Transverse colon (tissue), 4 donors: ENCODE measurements at regions of chr12 and their contacts with region 1.

Region 1: GRCh38 chr12:32755654-32756475 is at the start of gene YARS2:
- DNase-seq: peak; percentile 96
- H3K4me3 ChIP-seq: peak within 1 kb of the TSS; percentile 83 to 99 (median 96)
- H3K27ac ChIP-seq: peak within 1 kb of the TSS; percentile 92 to 95 (median 94)
- H3K4me1 ChIP-seq: peaks cover 11 to 24% (median 18%) of the 10 kb centered on the region in 4 donors
- H3K27me3 ChIP-seq: no peaks in the 10 kb centered on the region
- CTCF ChIP-seq: peak; percentile 69 to 92 (median 77)
- EP300 ChIP-seq: no peak
- POLR2A ChIP-seq: peak; percentile 66
- total RNA-seq, gene YARS2: 1.5 to 19.9 (median 10.5) TPM

Region 2: GRCh38 chr12:32478858-32479725 is 276.8 kb before region 1 on chr12:
- in situ Hi-C with region 1: no loop called
- intact Hi-C with region 1: no loop called
- DNase-seq: no peak
- H3K4me3 ChIP-seq: no peak overlapping the region
- H3K27ac ChIP-seq: peak overlapping the region; percentile 20 to 44 (median 30)
- H3K4me1 ChIP-seq: peaks cover 0 to 20% (median 7%) of the 10 kb centered on the region in 4 donors
- H3K27me3 ChIP-seq: no peaks in the 10 kb centered on the region
- CTCF ChIP-seq: no peak
- EP300 ChIP-seq: no peak
- POLR2A ChIP-seq: no peak

Region 3: DNA sequence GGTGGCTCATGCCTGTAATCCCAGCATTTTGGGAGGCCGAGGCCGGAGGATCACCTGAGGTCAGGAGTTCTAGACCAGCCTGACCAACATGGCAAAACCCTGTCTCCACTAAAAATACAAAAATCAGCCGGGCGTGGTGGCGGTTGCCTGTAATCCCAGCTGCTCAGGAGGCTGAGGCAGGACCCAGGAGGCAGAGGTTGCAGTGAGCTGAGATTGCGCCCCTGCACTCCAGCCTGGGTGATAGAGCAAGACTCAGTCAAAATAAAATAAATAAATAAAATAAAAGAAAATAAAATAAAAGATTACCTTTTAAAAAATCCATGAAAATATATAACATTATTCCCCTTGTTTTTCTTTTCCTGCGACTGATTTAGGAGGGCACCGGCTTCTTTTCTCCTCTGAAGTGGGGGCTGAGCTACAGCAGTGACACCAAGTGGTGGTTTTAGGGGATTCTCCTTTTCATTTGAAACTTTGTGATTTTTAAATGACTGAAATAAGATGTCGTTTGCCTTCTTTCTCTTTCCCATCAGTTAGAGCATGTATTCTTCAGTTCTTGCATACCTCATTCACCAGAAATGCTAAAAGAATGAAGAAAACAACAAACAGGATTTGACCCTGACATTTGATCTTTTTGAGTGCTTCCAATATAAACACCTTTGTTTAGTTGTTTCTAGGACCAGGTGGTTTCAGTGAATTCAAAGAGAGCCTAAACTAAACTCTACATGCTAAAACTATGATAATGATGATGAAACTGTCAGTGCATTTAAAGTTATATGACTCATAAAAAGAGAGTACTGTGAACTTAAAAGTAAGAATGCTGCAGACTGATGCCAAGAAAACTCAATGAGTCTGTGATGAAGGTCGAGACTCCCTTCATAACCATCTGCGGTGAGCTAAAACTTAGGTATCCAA is 163.3 kb after region 1 on chr12:
- in situ Hi-C with region 1: loop called in 3 of 4 experiments (anchors 10 to 25 kb)
- intact Hi-C with region 1: no loop called
- DNase-seq: no peak
- H3K4me3 ChIP-seq: no peak overlapping the region
- H3K27ac ChIP-seq: no peak overlapping the region
- H3K4me1 ChIP-seq: peaks cover 0 to 17% (median 0%) of the 10 kb centered on the region in 4 donors
- H3K27me3 ChIP-seq: no peaks in the 10 kb centered on the region
- CTCF ChIP-seq: peak; percentile 38 to 63 (median 47)
- EP300 ChIP-seq: no peak
- POLR2A ChIP-seq: no peak

Region 4: DNA sequence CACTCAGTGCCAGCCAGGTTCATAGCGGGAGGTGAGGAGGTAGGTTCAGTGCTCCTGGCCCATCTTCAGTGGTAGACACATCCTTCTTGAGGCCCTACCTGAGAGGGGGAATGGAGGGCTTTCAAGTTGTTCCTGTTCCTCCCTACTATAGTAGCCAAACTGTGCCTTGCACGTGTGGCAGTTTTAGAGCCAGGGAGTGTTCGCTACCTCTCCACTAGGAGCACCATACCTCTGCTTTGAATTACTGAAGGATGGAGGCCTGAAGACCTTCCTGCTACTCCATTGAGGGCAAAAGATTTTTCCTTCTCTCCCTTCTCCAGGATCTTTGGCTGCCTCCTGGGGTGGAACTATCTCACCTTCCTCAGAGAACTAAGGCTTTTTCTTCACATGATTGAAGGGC is 1260.5 kb after region 1 on chr12:
- in situ Hi-C with region 1: loop called (anchors 10 kb)
- intact Hi-C with region 1: loop called (anchors 5 kb)
- DNase-seq: no peak
- H3K4me3 ChIP-seq: no peak overlapping the region
- H3K27ac ChIP-seq: no peak overlapping the region
- H3K4me1 ChIP-seq: peaks cover 0 to 2% (median under 1%) of the 10 kb centered on the region in 4 donors
- H3K27me3 ChIP-seq: no peaks in the 10 kb centered on the region
- CTCF ChIP-seq: no peak
- EP300 ChIP-seq: no peak
- POLR2A ChIP-seq: no peak

Region 5: GRCh38 chr12:34022079-34022830 is 1266.4 kb after region 1 on chr12 and contains the start of gene ALG10:
- in situ Hi-C with region 1: loop called (anchors 10 kb)
- intact Hi-C with region 1: loop called (anchors 5 kb)
- DNase-seq: peak; percentile 97
- H3K4me3 ChIP-seq: peak within 1 kb of the TSS; percentile 52 to 80 (median 68)
- H3K27ac ChIP-seq: peak within 1 kb of the TSS; percentile 85 to 91 (median 87)
- H3K4me1 ChIP-seq: peaks cover 3 to 15% (median 9%) of the 10 kb centered on the region in 4 donors
- H3K27me3 ChIP-seq: no peaks in the 10 kb centered on the region
- CTCF ChIP-seq: peak; percentile 71 to 90 (median 78)
- EP300 ChIP-seq: no peak
- POLR2A ChIP-seq: peak; percentile 32
- total RNA-seq, gene ALG10: 1.1 to 77.6 (median 7.8) TPM